Activated CD4-positive, alpha-beta memory T cell treated with anti-CD3 and anti-CD28 coated beads for 36 hours (primary cell): ENCODE measurements at regions of chr4 and their contacts with region 1.

Region 1: GRCh38 chr4:7987148-7987989 is 47.7 kb upstream of the AFAP1 start:
- DNase-seq: peak; percentile 87
- H3K4me3 Mint-ChIP-seq: no peak overlapping the region
- H3K27ac Mint-ChIP-seq: no peak overlapping the region
- H3K4me1 Mint-ChIP-seq: peaks cover 7% of the 10 kb centered on the region
- H3K27me3 Mint-ChIP-seq: peaks cover 4% of the 10 kb centered on the region

Region 2: GRCh38 chr4:7761720-7762119 is 225.6 kb before region 1 on chr4:
- CTCF ChIA-PET with region 1: interaction called, 13 read pairs
- POLR2A ChIA-PET with region 1: no interaction called
- intact Hi-C with region 1: no loop called
- DNase-seq: peak; percentile 66
- H3K4me3 Mint-ChIP-seq: no peak overlapping the region
- H3K27ac Mint-ChIP-seq: peak overlapping the region; percentile 69
- H3K4me1 Mint-ChIP-seq: peaks cover 30% of the 10 kb centered on the region
- H3K27me3 Mint-ChIP-seq: no peaks in the 10 kb centered on the region

Region 3: GRCh38 chr4:7876201-7876875 is 111.0 kb before region 1 on chr4:
- CTCF ChIA-PET with region 1: interaction called, 16 read pairs
- POLR2A ChIA-PET with region 1: no interaction called
- intact Hi-C with region 1: no loop called
- DNase-seq: peak; percentile 65
- H3K4me3 Mint-ChIP-seq: peak overlapping the region; percentile 58
- H3K27ac Mint-ChIP-seq: peak overlapping the region; percentile 66
- H3K4me1 Mint-ChIP-seq: peaks cover 62% of the 10 kb centered on the region
- H3K27me3 Mint-ChIP-seq: no peaks in the 10 kb centered on the region

Region 4: DNA sequence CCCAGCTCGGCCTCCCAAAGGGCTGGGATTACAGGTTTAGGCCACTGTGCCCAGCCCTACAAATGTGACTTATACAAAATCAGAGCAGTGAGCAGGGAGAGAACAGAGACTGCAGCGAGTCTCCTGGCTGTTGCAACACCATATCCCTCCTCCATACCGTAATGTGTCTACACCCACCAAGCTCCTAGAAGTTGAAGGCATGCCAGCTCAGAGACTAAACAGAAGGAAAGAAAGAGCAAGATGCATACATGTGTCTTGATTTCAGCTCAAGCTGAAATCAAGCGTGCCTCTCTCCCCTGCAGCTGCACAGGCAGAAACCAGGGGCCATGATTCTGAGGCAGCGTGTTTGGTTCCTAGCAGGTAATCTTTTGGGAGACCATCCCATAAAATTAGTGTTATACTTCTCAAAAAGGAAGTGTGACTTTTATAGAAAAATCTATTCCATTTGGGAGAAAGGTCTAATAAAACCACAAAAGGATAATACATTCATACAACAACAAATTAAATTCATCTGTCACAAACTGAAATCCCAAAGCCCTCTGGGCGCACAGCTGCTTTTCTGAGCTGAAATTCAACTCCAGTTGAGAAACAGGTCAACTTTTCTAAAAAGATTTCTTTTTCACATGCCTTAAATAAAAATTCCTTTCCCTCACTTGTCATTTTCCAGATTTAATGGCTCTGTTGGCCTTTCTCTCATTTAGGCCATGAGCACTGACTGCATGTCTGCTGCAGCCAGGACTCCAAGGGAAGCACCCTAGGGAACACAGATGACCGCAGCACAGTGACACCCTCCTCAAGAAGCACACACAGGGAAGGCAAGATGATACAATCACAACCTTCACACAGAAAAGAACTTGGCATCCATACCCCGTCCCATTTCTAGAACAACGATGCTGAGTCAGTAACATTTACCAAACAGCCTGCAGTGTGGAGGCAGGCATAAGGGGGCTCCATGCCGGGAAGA is 82.1 kb before region 1 on chr4:
- CTCF ChIA-PET with region 1: no interaction called
- POLR2A ChIA-PET with region 1: no interaction called
- intact Hi-C with region 1: no loop called
- DNase-seq: no peak
- H3K4me3 Mint-ChIP-seq: no peak overlapping the region
- H3K27ac Mint-ChIP-seq: no peak overlapping the region
- H3K4me1 Mint-ChIP-seq: peaks cover 47% of the 10 kb centered on the region
- H3K27me3 Mint-ChIP-seq: no peaks in the 10 kb centered on the region

Region 5: DNA sequence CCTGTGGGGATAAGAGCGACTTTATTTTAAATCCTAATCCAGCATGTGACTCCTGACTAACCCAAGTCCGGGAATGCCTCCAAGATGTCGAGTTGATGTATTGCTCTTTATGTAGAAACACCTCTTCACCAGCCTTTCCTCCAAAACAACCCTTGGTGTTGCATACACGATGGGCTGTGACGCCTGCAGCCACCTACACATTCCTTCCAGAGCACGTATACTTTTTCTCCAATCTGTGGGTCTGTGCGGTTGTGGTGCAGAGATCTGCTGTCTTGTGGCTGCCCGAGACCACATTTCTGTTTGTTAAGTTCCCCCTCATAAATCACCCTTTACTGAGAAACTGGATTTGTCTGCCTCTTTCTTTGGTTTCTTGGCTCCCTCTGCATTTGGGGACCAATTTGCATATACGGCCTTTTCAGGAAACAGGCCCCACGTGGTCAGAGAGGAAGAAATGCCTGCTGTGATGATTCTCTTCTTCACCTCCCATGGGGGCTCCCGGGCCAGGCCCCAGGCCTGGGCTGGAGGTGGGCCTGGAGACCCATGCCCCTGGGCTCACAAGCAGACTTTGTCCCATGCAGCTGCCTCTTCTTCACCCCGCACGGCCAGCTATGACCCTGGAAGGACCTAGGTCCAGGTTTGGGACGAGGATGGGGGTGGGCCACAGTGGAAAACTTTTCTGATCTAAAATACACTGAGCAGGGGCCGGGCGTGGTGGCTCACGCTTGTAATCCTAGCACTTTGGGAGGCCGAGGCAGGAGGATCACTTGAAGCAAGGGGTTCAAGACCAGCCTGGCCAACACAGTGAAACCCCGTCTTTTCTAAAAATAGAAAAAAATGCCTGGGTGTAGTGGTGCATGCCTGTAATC is 26.3 kb before region 1 on chr4:
- CTCF ChIA-PET with region 1: interaction called, 5 read pairs
- POLR2A ChIA-PET with region 1: no interaction called
- intact Hi-C with region 1: loop called (anchors 2 kb)
- DNase-seq: peak; percentile 93
- H3K4me3 Mint-ChIP-seq: peak overlapping the region; percentile 38
- H3K27ac Mint-ChIP-seq: peak overlapping the region; percentile 94
- H3K4me1 Mint-ChIP-seq: peaks cover 53% of the 10 kb centered on the region
- H3K27me3 Mint-ChIP-seq: no peaks in the 10 kb centered on the region

Region 6: DNA sequence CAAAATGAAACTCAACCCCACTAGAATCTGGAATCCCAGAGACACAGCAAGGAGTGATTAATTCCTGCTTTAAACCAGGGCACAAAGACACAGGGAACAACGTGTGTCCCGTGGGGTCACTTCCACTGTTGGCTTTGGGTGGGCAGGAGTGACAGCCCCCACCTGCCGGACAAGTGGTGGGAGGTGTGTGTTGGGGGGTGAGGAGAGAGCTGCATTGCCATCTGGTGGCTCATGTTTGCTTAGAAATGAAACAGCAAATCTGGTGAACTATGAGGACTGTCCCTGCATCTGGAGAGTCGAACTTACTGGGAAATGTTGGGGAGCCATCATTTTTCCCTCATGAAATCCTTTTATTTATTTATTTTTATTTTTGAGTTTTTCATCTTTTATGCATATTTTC is 28.1 kb after region 1 on chr4:
- CTCF ChIA-PET with region 1: no interaction called
- POLR2A ChIA-PET with region 1: no interaction called
- intact Hi-C with region 1: no loop called
- DNase-seq: no peak
- H3K4me3 Mint-ChIP-seq: no peak overlapping the region
- H3K27ac Mint-ChIP-seq: no peak overlapping the region
- H3K4me1 Mint-ChIP-seq: no peaks in the 10 kb centered on the region
- H3K27me3 Mint-ChIP-seq: peaks cover 1% of the 10 kb centered on the region